HEK293T (cell line): ENCODE measurements at regions of chr4 and their contacts with region 1.

Region 1: GRCh38 chr4:87150498-87151261 is 69.7 kb downstream of the KLHL8 start:
- DNase-seq: peak; percentile 50

Region 2: DNA sequence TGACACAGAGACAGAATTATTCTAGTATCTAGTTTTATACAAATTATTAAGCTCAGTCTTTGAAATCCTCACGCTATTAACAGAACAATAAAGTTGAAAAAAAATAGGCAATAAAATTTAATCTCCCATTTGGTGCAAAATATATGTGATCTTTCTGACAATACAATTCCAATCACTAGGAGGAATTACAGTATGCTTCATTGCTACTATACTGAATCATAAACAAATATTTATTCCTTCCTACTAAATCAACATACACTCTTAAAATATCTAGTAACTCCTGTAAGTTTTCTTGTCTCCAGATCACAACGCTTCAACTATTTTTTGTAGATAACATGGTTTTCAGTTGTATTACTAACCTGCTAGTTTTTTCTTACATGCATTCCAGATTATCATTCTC is 24.0 kb after region 1 on chr4:
- CTCF ChIA-PET with region 1: no interaction called
- POLR2A ChIA-PET with region 1: no interaction called
- DNase-seq: no peak

Region 3: GRCh38 chr4:87235020-87235671 is 84.5 kb after region 1 on chr4:
- CTCF ChIA-PET with region 1: interaction called, 11 read pairs
- POLR2A ChIA-PET with region 1: no interaction called
- DNase-seq: no peak